CD8-positive, alpha-beta T cell (primary cell): ENCODE measurements at regions of chr16 and their contacts with region 1.

Region 1: GRCh38 chr16:18932243-18932981 is 6.2 kb upstream of the SMG1 start:
- DNase-seq: no peak
- ATAC-seq: no peak
- H3K4me3 ChIP-seq: no peak overlapping the region
- H3K4me3 Mint-ChIP-seq: no peak overlapping the region
- H3K27ac ChIP-seq: no peak overlapping the region
- H3K27ac Mint-ChIP-seq: no peak overlapping the region
- H3K4me1 ChIP-seq: no peaks in the 10 kb centered on the region
- H3K4me1 Mint-ChIP-seq: peaks cover 4% of the 10 kb centered on the region
- H3K27me3 ChIP-seq: no peaks in the 10 kb centered on the region
- H3K27me3 Mint-ChIP-seq: peaks cover under 1% of the 10 kb centered on the region
- CTCF ChIP-seq: no peak

Region 2: DNA sequence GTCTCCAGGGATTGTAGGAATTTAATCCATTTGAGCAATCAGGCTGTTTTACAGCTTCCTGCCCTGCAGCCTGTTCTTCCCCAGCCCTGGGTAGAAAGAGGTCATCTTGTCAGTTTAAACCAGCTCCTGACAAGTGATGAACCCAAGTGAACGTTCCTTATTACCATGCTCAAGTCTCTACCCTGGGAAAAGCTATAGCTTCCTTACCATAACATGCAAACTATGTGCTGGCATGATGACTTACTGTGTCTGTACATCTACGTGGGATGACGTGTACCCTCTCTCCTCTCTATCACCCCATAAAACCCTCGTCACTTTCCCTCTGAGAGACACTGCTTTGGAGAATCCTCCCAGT is 1913.8 kb before region 1 on chr16:
- CTCF ChIA-PET with region 1: no interaction called
- POLR2A ChIA-PET with region 1: no interaction called
- intact Hi-C with region 1: loop called in 1 of 2 experiments (anchors 10 kb)
- DNase-seq: no peak
- ATAC-seq: no peak
- H3K4me3 ChIP-seq: no peak overlapping the region
- H3K4me3 Mint-ChIP-seq: no peak overlapping the region
- H3K27ac ChIP-seq: no peak overlapping the region
- H3K27ac Mint-ChIP-seq: no peak overlapping the region
- H3K4me1 ChIP-seq: peaks cover 4% of the 10 kb centered on the region
- H3K4me1 Mint-ChIP-seq: peaks cover 20% of the 10 kb centered on the region
- H3K27me3 ChIP-seq: no peaks in the 10 kb centered on the region
- H3K27me3 Mint-ChIP-seq: no peaks in the 10 kb centered on the region
- CTCF ChIP-seq: no peak

Region 3: GRCh38 chr16:18959031-18959505 is 26.7 kb after region 1 on chr16:
- CTCF ChIA-PET with region 1: no interaction called
- POLR2A ChIA-PET with region 1: no interaction called
- intact Hi-C with region 1: loop called in 1 of 2 experiments (anchors 1 kb)
- DNase-seq: no peak
- ATAC-seq: no peak
- H3K4me3 ChIP-seq: no peak overlapping the region
- H3K4me3 Mint-ChIP-seq: no peak overlapping the region
- H3K27ac ChIP-seq: no peak overlapping the region
- H3K27ac Mint-ChIP-seq: no peak overlapping the region
- H3K4me1 ChIP-seq: peaks cover 5% of the 10 kb centered on the region
- H3K4me1 Mint-ChIP-seq: peaks cover 7% of the 10 kb centered on the region
- H3K27me3 ChIP-seq: no peaks in the 10 kb centered on the region
- H3K27me3 Mint-ChIP-seq: no peaks in the 10 kb centered on the region
- CTCF ChIP-seq: no peak

Region 4: DNA sequence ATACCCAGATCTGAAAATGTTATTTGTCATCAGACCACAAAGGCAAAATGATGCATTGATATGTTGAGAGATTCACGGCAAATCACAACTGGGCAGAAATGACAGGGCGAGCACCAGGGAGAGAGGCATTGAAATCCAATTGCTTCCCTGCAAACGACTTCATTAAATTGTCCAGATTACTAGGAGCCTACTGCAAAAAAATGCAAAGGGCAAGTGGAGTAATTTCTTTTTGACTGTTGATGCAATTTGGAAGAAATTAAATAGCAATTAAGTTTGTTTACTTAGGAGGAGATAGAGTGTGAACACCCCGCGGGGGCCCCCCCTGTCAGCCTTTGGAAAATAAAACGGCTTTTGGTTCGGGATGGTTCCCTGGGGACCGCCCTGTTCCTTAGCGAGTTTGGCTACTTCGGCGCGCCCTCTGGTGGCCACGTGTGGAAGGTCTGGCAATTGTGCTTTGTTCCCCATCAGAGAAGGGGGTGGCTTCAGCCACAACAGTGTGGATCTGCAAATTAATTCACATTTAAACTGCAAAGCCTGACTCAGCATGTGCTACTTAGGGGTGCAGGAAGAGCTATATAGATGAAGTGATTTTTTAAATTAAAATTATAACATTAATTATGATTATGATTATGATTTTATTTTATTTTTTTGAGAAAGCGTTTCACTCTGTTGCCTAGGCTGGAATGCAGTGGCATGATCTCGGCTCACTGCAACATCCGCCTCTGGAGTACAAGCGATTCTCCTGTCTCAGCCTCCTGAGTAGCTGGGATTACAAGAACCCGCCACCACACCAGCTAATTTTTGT is 36.8 kb after region 1 on chr16:
- CTCF ChIA-PET with region 1: interaction called, 4 read pairs
- POLR2A ChIA-PET with region 1: no interaction called
- intact Hi-C with region 1: loop called in 1 of 2 experiments (anchors 5 kb)
- DNase-seq: peak; percentile 58 to 89 (median 76)
- ATAC-seq: peak; percentile 81
- H3K4me3 ChIP-seq: no peak overlapping the region
- H3K4me3 Mint-ChIP-seq: no peak overlapping the region
- H3K27ac ChIP-seq: no peak overlapping the region
- H3K27ac Mint-ChIP-seq: no peak overlapping the region
- H3K4me1 ChIP-seq: no peaks in the 10 kb centered on the region
- H3K4me1 Mint-ChIP-seq: peaks cover 5% of the 10 kb centered on the region
- H3K27me3 ChIP-seq: no peaks in the 10 kb centered on the region
- H3K27me3 Mint-ChIP-seq: no peaks in the 10 kb centered on the region
- CTCF ChIP-seq: peak; percentile 97

Region 5: GRCh38 chr16:19521471-19522396 is 589.3 kb after region 1 on chr16 and contains the start of gene GDE1:
- CTCF ChIA-PET with region 1: no interaction called
- POLR2A ChIA-PET with region 1: no interaction called
- intact Hi-C with region 1: loop called in 1 of 2 experiments (anchors 2 kb)
- DNase-seq: peak; percentile 76 to 96 (median 92)
- ATAC-seq: peak; percentile 74
- H3K4me3 ChIP-seq: peak within 1 kb of the TSS; percentile 62 to 85
- H3K4me3 Mint-ChIP-seq: peak within 1 kb of the TSS; percentile 93
- H3K27ac ChIP-seq: peak within 1 kb of the TSS; percentile 67 to 77
- H3K27ac Mint-ChIP-seq: peak within 1 kb of the TSS; percentile 92
- H3K4me1 ChIP-seq: peaks cover 32% of the 10 kb centered on the region
- H3K4me1 Mint-ChIP-seq: peaks cover 61% of the 10 kb centered on the region
- H3K27me3 ChIP-seq: no peaks in the 10 kb centered on the region
- H3K27me3 Mint-ChIP-seq: no peaks in the 10 kb centered on the region
- CTCF ChIP-seq: peak; percentile 22
- total RNA-seq, gene GDE1: 26.2 to 29.0 TPM

Region 6: DNA sequence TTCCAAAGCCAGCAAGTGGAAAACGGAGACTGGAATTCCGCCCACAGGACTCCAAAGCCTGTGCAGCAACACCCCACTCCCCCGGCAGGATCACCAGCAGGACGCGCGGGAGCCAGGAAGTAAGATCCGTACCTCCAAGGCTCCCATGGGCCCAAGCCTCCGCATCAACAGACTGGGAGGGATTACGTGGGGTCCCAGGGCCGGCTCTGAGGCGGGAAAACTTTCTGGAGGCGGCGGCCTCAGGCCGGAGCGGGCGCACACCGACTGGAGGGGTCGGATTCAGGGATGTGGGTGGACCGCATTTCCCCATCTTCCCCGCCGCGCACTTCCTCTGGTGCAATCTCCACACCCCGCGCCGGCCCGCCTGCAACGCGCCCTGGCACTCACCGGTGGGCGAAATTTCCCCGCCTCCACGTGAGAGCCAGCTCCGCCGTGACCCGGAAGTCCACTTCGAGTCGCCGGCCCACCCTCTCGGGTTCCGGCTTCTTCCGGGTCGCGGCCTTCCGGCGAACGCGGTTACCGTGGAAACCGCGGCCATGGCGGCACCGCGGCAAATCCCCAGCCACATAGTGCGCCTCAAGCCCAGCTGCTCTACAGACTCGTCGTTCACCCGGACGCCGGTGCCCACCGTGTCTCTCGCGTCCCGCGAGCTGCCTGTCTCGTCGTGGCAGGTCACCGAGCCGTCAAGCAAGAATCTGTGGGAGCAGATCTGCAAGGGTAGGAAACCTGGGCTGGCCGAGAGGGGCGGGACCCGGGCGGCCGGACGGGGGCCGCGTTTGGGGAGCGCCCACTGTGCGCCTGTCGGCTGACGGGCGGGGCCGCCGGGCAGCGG is 785.6 kb after region 1 on chr16 and contains the starts of genes IQCK and KNOP1:
- CTCF ChIA-PET with region 1: no interaction called
- POLR2A ChIA-PET with region 1: no interaction called
- intact Hi-C with region 1: loop called (anchors 5 kb)
- DNase-seq: peak; percentile 72 to 97 (median 86)
- ATAC-seq: peak; percentile 89
- H3K4me3 ChIP-seq: peak within 1 kb of the TSS; percentile 80 to 95
- H3K4me3 Mint-ChIP-seq: peak within 1 kb of the TSS; percentile 91
- H3K27ac ChIP-seq: peak within 1 kb of the TSS; percentile 49 to 64
- H3K27ac Mint-ChIP-seq: peak within 1 kb of the TSS; percentile 71
- H3K4me1 ChIP-seq: peaks cover 6% of the 10 kb centered on the region
- H3K4me1 Mint-ChIP-seq: peaks cover 32% of the 10 kb centered on the region
- H3K27me3 ChIP-seq: no peaks in the 10 kb centered on the region
- H3K27me3 Mint-ChIP-seq: no peaks in the 10 kb centered on the region
- CTCF ChIP-seq: no peak
- total RNA-seq, gene IQCK: 0.72 to 2.1 TPM
- total RNA-seq, gene KNOP1: 3.4 to 3.6 TPM